CD8-positive, alpha-beta memory T cell (primary cell): ENCODE measurements at regions of chr17 and their contacts with region 1.

Region 1: GRCh38 chr17:75173526-75173925 is 9.2 kb downstream of the SUMO2 start:
- DNase-seq: no peak
- H3K4me3 ChIP-seq: no peak overlapping the region
- H3K4me3 Mint-ChIP-seq: no peak overlapping the region
- H3K27ac ChIP-seq: no peak overlapping the region
- H3K27ac Mint-ChIP-seq: peak overlapping the region in 3 of 8 donors; percentile 26 to 58 (median 29)
- H3K4me1 ChIP-seq: peaks cover 8% of the 10 kb centered on the region
- H3K4me1 Mint-ChIP-seq: peaks cover 14 to 28% (median 17%) of the 10 kb centered on the region in 3 donors
- H3K27me3 ChIP-seq: no peaks in the 10 kb centered on the region
- H3K27me3 Mint-ChIP-seq: no peaks in the 10 kb centered on the region

Region 2: DNA sequence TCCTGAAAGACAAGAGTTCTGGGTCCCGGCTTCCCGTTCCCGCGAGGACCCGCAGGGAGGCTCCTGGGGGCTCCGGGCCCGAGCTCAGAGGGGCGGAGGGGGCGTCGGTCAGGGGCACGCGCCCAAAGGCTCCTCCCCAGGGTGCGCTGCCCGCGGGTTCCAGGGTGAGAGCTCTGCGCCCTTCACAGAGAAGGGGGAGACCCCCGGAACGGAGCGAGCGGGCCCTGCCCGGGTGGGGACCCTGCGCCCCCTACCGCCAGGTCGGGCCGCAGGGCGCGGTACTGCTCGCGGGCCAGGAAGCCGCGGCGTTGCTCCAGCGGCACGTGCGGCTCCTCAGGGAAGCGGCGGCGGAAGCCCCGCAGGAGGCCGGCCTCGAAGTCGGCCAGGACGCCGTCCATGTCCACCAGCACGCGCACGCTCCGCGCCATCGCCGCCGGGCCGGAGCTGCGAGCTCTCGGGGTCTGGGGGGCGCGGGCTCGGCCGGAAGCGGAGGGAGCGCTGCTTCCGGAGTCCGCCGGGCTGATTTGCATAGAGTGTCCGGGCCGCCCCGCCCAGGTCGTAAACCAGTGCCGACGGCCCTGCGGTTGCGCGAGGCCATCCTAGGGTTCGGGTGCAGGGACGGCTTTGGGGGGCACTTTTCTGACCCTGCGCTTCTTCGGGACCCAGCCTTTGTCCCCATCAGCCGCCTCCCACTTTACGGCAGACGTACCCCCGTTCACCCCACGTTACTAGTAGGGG is 42.1 kb before region 1 on chr17 and contains the start of gene NT5C:
- CTCF ChIA-PET with region 1: interaction called, 19 read pairs
- POLR2A ChIA-PET with region 1: interaction called, 5 read pairs
- DNase-seq: peak; percentile 48 to 70 (median 64)
- H3K4me3 ChIP-seq: peak within 1 kb of the TSS; percentile 52
- H3K4me3 Mint-ChIP-seq: peak within 1 kb of the TSS; percentile 84 to 97 (median 89)
- H3K27ac ChIP-seq: peak within 1 kb of the TSS; percentile 67
- H3K27ac Mint-ChIP-seq: peak within 1 kb of the TSS; percentile 56 to 96 (median 88)
- H3K4me1 ChIP-seq: peaks cover 10% of the 10 kb centered on the region
- H3K4me1 Mint-ChIP-seq: peaks cover 7 to 16% (median 11%) of the 10 kb centered on the region in 3 donors
- H3K27me3 ChIP-seq: no peaks in the 10 kb centered on the region
- H3K27me3 Mint-ChIP-seq: no peaks in the 10 kb centered on the region
- total RNA-seq, gene NT5C: 75.7 to 84.8 TPM

Region 3: GRCh38 chr17:75154195-75155106 is 19.1 kb before region 1 on chr17 and contains the start of gene JPT1:
- CTCF ChIA-PET with region 1: interaction called, 11 read pairs
- POLR2A ChIA-PET with region 1: interaction called, 3 read pairs
- DNase-seq: peak; percentile 95 to 99 (median 96)
- H3K4me3 ChIP-seq: peak within 1 kb of the TSS; percentile 85
- H3K4me3 Mint-ChIP-seq: peak within 1 kb of the TSS; percentile 87 to 98 (median 92)
- H3K27ac ChIP-seq: peak within 1 kb of the TSS; percentile 73
- H3K27ac Mint-ChIP-seq: peak within 1 kb of the TSS; percentile 73 to 93 (median 86)
- H3K4me1 ChIP-seq: peaks cover 20% of the 10 kb centered on the region
- H3K4me1 Mint-ChIP-seq: peaks cover 28 to 37% (median 33%) of the 10 kb centered on the region in 3 donors
- H3K27me3 ChIP-seq: no peaks in the 10 kb centered on the region
- H3K27me3 Mint-ChIP-seq: peaks cover 0 to 3% of the 10 kb centered on the region in 2 donors
- total RNA-seq, gene JPT1: 189 to 200 TPM

Region 4: GRCh38 chr17:75191584-75191983 is 18.1 kb after region 1 on chr17:
- CTCF ChIA-PET with region 1: interaction called, 11 read pairs
- POLR2A ChIA-PET with region 1: no interaction called
- DNase-seq: no peak
- H3K4me3 ChIP-seq: no peak overlapping the region
- H3K4me3 Mint-ChIP-seq: no peak overlapping the region
- H3K27ac ChIP-seq: no peak overlapping the region
- H3K27ac Mint-ChIP-seq: no peak overlapping the region
- H3K4me1 ChIP-seq: no peaks in the 10 kb centered on the region
- H3K4me1 Mint-ChIP-seq: peaks cover 0 to 6% (median 5%) of the 10 kb centered on the region in 3 donors
- H3K27me3 ChIP-seq: no peaks in the 10 kb centered on the region
- H3K27me3 Mint-ChIP-seq: no peaks in the 10 kb centered on the region

Region 5: DNA sequence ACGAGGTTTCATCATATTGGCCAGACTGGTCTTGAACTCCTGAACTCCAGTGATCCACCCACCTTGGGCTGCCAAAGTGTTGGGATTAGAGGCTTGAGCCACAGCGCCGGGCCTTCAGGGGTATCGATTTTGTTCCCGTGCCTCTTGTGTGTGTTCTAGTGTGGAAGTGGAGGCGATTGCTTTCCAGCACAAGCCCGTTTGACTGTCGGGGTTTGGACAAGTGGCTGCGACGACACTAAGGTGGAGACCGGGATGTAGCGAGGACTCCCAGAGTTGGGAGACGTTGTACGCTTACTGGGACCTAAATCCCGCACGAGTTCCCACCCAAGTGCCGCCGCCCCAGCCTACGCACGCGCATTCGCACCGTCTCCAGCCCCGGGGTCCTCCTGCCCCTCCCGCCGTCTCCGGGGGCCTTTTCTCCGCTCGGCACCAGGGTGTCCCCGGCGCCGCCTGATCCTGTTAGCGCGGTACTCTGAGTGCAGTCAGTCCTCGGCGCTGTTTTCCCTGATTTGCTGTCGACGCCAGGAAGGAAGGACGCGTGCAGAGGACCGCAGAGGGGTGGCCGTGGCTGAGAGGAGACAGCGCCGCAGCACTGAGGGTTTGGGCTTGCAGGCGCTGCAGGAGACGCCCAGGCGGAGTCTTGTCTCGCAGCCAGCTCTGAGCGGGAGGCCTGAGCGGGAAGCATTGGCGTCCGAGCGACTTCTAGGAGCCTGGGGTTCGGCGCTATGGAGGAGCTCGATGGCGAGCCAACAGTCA is 31.7 kb after region 1 on chr17 and contains the start of gene NUP85:
- CTCF ChIA-PET with region 1: interaction called, 14 read pairs
- POLR2A ChIA-PET with region 1: interaction called, 3 read pairs
- DNase-seq: peak; percentile 88 to 94 (median 91)
- H3K4me3 ChIP-seq: peak within 1 kb of the TSS; percentile 92
- H3K4me3 Mint-ChIP-seq: peak within 1 kb of the TSS; percentile 94 to 98 (median 96)
- H3K27ac ChIP-seq: peak within 1 kb of the TSS; percentile 91
- H3K27ac Mint-ChIP-seq: peak within 1 kb of the TSS; percentile 93 to 99 (median 98)
- H3K4me1 ChIP-seq: peaks cover 8% of the 10 kb centered on the region
- H3K4me1 Mint-ChIP-seq: peaks cover 31 to 42% (median 39%) of the 10 kb centered on the region in 3 donors
- H3K27me3 ChIP-seq: no peaks in the 10 kb centered on the region
- H3K27me3 Mint-ChIP-seq: no peaks in the 10 kb centered on the region
- total RNA-seq, gene NUP85: 147 to 152 TPM